MCF 10A (cell line): ENCODE measurements at regions of chr17 and their contacts with region 1.

Region 1: DNA sequence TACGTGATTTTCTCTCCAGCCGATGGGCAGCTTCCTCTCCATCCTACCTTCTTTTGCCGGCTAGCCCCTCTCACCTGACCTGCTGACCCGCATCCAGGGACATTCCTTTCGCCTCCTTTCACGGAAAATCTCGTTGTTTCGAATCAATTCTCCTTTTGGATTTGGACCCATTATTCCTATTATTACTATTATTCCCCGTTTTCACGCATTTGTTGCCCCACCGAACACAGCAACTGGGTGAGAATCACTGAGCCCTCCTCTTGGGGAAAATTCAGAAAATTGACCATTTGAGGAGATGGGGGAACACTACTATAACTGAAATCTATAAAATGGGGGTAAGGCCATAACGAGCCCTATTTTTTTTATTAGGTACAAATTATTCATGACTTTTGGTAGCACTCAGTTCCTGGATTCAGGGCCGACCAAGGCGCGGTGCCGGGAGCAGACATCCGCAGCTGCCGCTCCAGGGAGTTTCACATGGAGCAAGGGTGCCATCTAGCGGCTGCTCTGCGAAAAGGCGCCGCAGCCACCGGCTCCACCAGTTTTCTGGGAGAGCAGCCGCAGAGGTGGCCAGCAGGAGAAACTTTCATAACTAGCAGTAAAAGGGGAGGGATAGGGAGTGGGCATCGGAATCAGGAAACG is 3.3 kb upstream of the HOXB8 start:
- DNase-seq: peak; percentile 77
- H3K4me3 Mint-ChIP-seq: no peak overlapping the region
- H3K27ac Mint-ChIP-seq: no peak overlapping the region
- H3K4me1 Mint-ChIP-seq: peaks cover 4% of the 10 kb centered on the region
- H3K27me3 Mint-ChIP-seq: peaks cover 100% of the 10 kb centered on the region
- CTCF ChIP-seq: peak; percentile 89

Region 2: GRCh38 chr17:47990962-47991731 is 627.2 kb before region 1 on chr17:
- CTCF ChIA-PET with region 1: no interaction called
- POLR2A ChIA-PET with region 1: no interaction called
- intact Hi-C with region 1: no loop called
- DNase-seq: no peak
- H3K4me3 Mint-ChIP-seq: no peak overlapping the region
- H3K27ac Mint-ChIP-seq: no peak overlapping the region
- H3K4me1 Mint-ChIP-seq: no peaks in the 10 kb centered on the region
- H3K27me3 Mint-ChIP-seq: no peaks in the 10 kb centered on the region
- CTCF ChIP-seq: no peak

Region 3: GRCh38 chr17:48153691-48154358 is 464.6 kb before region 1 on chr17:
- CTCF ChIA-PET with region 1: interaction called, 3 read pairs
- POLR2A ChIA-PET with region 1: no interaction called
- intact Hi-C with region 1: loop called (anchors 2 kb)
- DNase-seq: peak; percentile 47
- H3K4me3 Mint-ChIP-seq: no peak overlapping the region
- H3K27ac Mint-ChIP-seq: no peak overlapping the region
- H3K4me1 Mint-ChIP-seq: no peaks in the 10 kb centered on the region
- H3K27me3 Mint-ChIP-seq: peaks cover 53% of the 10 kb centered on the region
- CTCF ChIP-seq: peak; percentile 34

Region 4: GRCh38 chr17:48215583-48216139 is 402.7 kb before region 1 on chr17:
- CTCF ChIA-PET with region 1: no interaction called
- POLR2A ChIA-PET with region 1: no interaction called
- intact Hi-C with region 1: loop called (anchors 1 kb)
- DNase-seq: peak; percentile 46
- H3K4me3 Mint-ChIP-seq: no peak overlapping the region
- H3K27ac Mint-ChIP-seq: no peak overlapping the region
- H3K4me1 Mint-ChIP-seq: no peaks in the 10 kb centered on the region
- H3K27me3 Mint-ChIP-seq: peaks cover 71% of the 10 kb centered on the region
- CTCF ChIP-seq: peak; percentile 80

Region 5: GRCh38 chr17:48259694-48260291 is 358.6 kb before region 1 on chr17:
- CTCF ChIA-PET with region 1: interaction called, 5 read pairs
- POLR2A ChIA-PET with region 1: no interaction called
- intact Hi-C with region 1: loop called (anchors 1 kb)
- DNase-seq: peak; percentile 52
- H3K4me3 Mint-ChIP-seq: no peak overlapping the region
- H3K27ac Mint-ChIP-seq: no peak overlapping the region
- H3K4me1 Mint-ChIP-seq: no peaks in the 10 kb centered on the region
- H3K27me3 Mint-ChIP-seq: peaks cover 53% of the 10 kb centered on the region
- CTCF ChIP-seq: peak; percentile 39

Region 6: DNA sequence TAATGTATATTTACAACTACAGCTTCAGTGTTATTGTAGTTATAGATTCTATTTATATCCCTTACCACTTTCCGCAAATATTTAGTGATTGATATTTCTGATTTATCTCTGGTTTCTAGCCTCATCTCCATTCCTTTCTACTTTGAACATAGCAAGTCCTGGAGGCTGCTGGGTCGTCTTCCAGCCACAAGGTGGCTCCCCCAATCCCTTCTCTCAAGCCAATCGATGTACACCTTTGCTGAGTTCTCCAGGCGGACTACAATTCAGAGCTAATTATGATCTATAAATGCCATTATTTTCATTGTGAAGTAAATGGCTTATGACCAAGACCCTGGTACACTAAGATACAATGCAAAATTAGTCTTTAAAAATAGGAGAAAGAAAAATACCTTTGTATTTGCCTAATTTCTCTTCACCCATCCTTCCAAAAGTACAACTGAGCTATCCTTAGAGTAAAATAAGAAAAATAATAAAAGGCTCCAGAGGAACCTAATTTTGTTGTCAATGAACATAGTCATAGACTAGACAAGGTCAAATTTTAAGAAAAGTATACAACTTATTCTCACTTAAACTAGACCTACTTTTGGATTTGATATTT is 310.5 kb before region 1 on chr17:
- CTCF ChIA-PET with region 1: interaction called, 10 read pairs
- POLR2A ChIA-PET with region 1: no interaction called
- intact Hi-C with region 1: loop called (anchors 1 kb)
- DNase-seq: peak; percentile 58
- H3K4me3 Mint-ChIP-seq: no peak overlapping the region
- H3K27ac Mint-ChIP-seq: no peak overlapping the region
- H3K4me1 Mint-ChIP-seq: no peaks in the 10 kb centered on the region
- H3K27me3 Mint-ChIP-seq: peaks cover 94% of the 10 kb centered on the region
- CTCF ChIP-seq: peak; percentile 74

Region 7: DNA sequence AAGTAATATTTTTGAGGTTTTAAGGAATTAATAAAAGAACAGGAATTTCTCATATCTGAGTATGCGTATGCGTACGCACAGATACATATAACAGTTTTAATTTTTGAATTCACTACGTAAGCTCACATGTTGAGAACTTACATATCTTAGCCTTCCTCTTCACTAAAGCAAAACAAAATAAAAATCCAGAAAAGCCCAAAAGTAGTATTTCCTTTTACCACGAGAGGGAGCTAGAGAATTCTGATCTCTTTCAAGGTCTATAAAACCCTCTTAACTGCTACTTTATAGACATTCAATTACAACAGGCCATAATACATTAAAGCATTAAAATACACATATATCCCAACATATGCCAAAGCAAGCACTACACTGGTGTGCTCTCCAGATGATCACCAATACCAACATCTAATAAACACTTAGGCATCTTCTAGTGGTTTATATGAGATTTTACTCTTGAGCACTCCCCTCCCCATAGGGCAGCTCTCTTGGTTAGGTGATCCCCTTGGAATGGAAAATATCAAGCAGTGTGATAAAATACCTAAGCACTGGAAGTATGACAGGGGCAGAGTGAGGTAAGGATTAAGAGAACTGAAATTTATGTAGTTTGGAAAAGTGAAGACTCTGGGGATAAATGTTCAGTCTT is 282.4 kb before region 1 on chr17:
- CTCF ChIA-PET with region 1: interaction called, 10 read pairs
- POLR2A ChIA-PET with region 1: no interaction called
- intact Hi-C with region 1: no loop called
- DNase-seq: peak; percentile 59
- H3K4me3 Mint-ChIP-seq: no peak overlapping the region
- H3K27ac Mint-ChIP-seq: no peak overlapping the region
- H3K4me1 Mint-ChIP-seq: no peaks in the 10 kb centered on the region
- H3K27me3 Mint-ChIP-seq: peaks cover 67% of the 10 kb centered on the region
- CTCF ChIP-seq: peak; percentile 48

Region 8: GRCh38 chr17:48646183-48647102 is 28.1 kb after region 1 on chr17:
- CTCF ChIA-PET with region 1: no interaction called
- POLR2A ChIA-PET with region 1: no interaction called
- intact Hi-C with region 1: no loop called
- DNase-seq: no peak
- H3K4me3 Mint-ChIP-seq: no peak overlapping the region
- H3K27ac Mint-ChIP-seq: no peak overlapping the region
- H3K4me1 Mint-ChIP-seq: peaks cover 6% of the 10 kb centered on the region
- H3K27me3 Mint-ChIP-seq: peaks cover 87% of the 10 kb centered on the region
- CTCF ChIP-seq: no peak